Activated CD4-positive, alpha-beta memory T cell treated with anti-CD3 and anti-CD28 coated beads, Interleukin-2, amount 10 ng/mL, durations not matched to agents 7 days and 5 days (primary cell): ENCODE measurements at regions of chr17 and their contacts with region 1.

Region 1: GRCh38 chr17:49361902-49362722 is at the start of gene ZNF652:
- DNase-seq: peak; percentile 97
- H3K4me3 Mint-ChIP-seq: peak within 1 kb of the TSS; percentile 95
- H3K27ac Mint-ChIP-seq: peak within 1 kb of the TSS; percentile 95
- H3K4me1 Mint-ChIP-seq: peaks cover 63% of the 10 kb centered on the region
- H3K27me3 Mint-ChIP-seq: no peaks in the 10 kb centered on the region
- total RNA-seq, gene ZNF652: 37.7 to 42.6 TPM

Region 2: GRCh38 chr17:49315551-49316257 is 46.4 kb before region 1 on chr17:
- CTCF ChIA-PET with region 1: interaction called, 132 read pairs
- POLR2A ChIA-PET with region 1: interaction called, 12 read pairs
- DNase-seq: peak; percentile 84
- H3K4me3 Mint-ChIP-seq: peak overlapping the region; percentile 41
- H3K27ac Mint-ChIP-seq: peak overlapping the region; percentile 79
- H3K4me1 Mint-ChIP-seq: peaks cover 33% of the 10 kb centered on the region
- H3K27me3 Mint-ChIP-seq: no peaks in the 10 kb centered on the region

Region 3: GRCh38 chr17:49343273-49343672 is 18.8 kb before region 1 on chr17:
- CTCF ChIA-PET with region 1: interaction called, 60 read pairs
- POLR2A ChIA-PET with region 1: interaction called, 124 read pairs
- DNase-seq: no peak
- H3K4me3 Mint-ChIP-seq: peak overlapping the region; percentile 63
- H3K27ac Mint-ChIP-seq: peak overlapping the region; percentile 91
- H3K4me1 Mint-ChIP-seq: peaks cover 72% of the 10 kb centered on the region
- H3K27me3 Mint-ChIP-seq: peaks cover 3% of the 10 kb centered on the region

Region 4: GRCh38 chr17:49349535-49349934 is 12.6 kb before region 1 on chr17:
- CTCF ChIA-PET with region 1: interaction called, 60 read pairs
- POLR2A ChIA-PET with region 1: interaction called, 124 read pairs
- DNase-seq: no peak
- H3K4me3 Mint-ChIP-seq: no peak overlapping the region
- H3K27ac Mint-ChIP-seq: no peak overlapping the region
- H3K4me1 Mint-ChIP-seq: peaks cover 45% of the 10 kb centered on the region
- H3K27me3 Mint-ChIP-seq: no peaks in the 10 kb centered on the region